A549 (cell line): ENCODE measurements at regions of chr12 and their contacts with region 1.

Region 1: GRCh38 chr12:49967042-49967776 is 5.5 kb downstream of the AQP5 start:
- DNase-seq: peak; percentile 91 to 93
- ATAC-seq: peak; percentile 76 to 87
- H3K4me3 ChIP-seq: peak overlapping the region; percentile 49
- H3K27ac ChIP-seq: peak overlapping the region; percentile 77 to 85
- H3K4me1 ChIP-seq: peaks cover 16% of the 10 kb centered on the region
- CTCF ChIP-seq: peak; percentile 79
- EP300 ChIP-seq: no peak
- POLR2A ChIP-seq: no peak
- RAD21 ChIP-seq: peak; percentile 81 to 86

Region 2: GRCh38 chr12:49740930-49741881 is 226.0 kb before region 1 on chr12 and contains the start of gene TMBIM6:
- CTCF ChIA-PET with region 1: no interaction called
- POLR2A ChIA-PET with region 1: no interaction called
- DNase-seq: peak; percentile 97 to 100
- ATAC-seq: peak; percentile 98
- H3K4me3 ChIP-seq: peak within 1 kb of the TSS; percentile 67
- H3K27ac ChIP-seq: peak within 1 kb of the TSS; percentile 71 to 92
- H3K4me1 ChIP-seq: peaks cover 18% of the 10 kb centered on the region
- CTCF ChIP-seq: peak; percentile 81
- EP300 ChIP-seq: no peak
- POLR2A ChIP-seq: peak; percentile 97
- RAD21 ChIP-seq: peak; percentile 42 to 62; a peak in 4 of 5 replicates
- polyA plus RNA-seq, gene TMBIM6: 1,088 and 1,255 TPM in 2 replicates

Region 3: GRCh38 chr12:49937639-49938300 is 29.4 kb before region 1 on chr12:
- CTCF ChIA-PET with region 1: interaction called, 33 read pairs
- POLR2A ChIA-PET with region 1: no interaction called
- DNase-seq: no peak
- ATAC-seq: peak; percentile 10 to 37; a peak in 3 of 6 replicates
- H3K4me3 ChIP-seq: no peak overlapping the region
- H3K27ac ChIP-seq: no peak overlapping the region
- H3K4me1 ChIP-seq: no peaks in the 10 kb centered on the region
- CTCF ChIP-seq: no peak
- EP300 ChIP-seq: no peak
- POLR2A ChIP-seq: no peak
- RAD21 ChIP-seq: no peak

Region 4: DNA sequence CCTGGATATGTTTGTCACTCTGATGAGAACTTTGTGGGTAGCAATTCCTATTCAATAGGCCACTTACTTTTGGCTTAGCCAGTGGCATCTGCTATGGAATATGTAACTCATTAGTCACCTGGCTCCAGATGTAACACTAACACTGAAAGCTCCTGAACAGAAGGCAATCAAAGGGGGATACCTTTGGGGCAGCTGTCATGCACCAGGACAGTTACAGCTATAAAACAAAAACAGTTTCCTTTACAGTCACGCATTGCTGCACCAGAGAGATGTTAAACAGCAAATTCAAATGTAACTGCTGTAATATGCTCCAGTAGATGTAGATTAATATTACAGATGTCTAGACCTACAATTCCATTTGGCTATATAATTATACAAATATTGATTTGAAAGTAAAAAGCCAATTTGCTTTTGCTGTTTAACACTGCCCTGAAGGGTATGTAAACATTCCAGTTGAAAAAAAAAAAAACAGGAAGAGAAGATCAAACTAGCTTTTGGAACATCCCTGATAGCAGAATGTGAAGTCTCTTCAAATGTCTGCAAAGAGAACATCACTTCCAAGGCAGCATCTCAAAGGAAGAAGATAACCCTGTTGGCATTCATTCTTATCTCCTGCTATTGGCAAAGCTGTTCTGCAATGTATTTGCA is 39.7 kb after region 1 on chr12:
- CTCF ChIA-PET with region 1: interaction called, 63 read pairs
- POLR2A ChIA-PET with region 1: no interaction called
- DNase-seq: no peak
- ATAC-seq: no peak
- H3K4me3 ChIP-seq: no peak overlapping the region
- H3K27ac ChIP-seq: no peak overlapping the region
- H3K4me1 ChIP-seq: no peaks in the 10 kb centered on the region
- CTCF ChIP-seq: no peak
- EP300 ChIP-seq: no peak
- POLR2A ChIP-seq: no peak
- RAD21 ChIP-seq: no peak

Region 5: GRCh38 chr12:50032639-50033581 is 65.7 kb after region 1 on chr12:
- CTCF ChIA-PET with region 1: interaction called, 75 read pairs
- POLR2A ChIA-PET with region 1: no interaction called
- DNase-seq: no peak
- ATAC-seq: peak in 1 of 2 experiments; percentile 19; a peak in 2 of 6 replicates
- H3K4me3 ChIP-seq: no peak overlapping the region
- H3K27ac ChIP-seq: no peak overlapping the region
- H3K4me1 ChIP-seq: no peaks in the 10 kb centered on the region
- CTCF ChIP-seq: no peak
- EP300 ChIP-seq: no peak
- POLR2A ChIP-seq: no peak
- RAD21 ChIP-seq: no peak

Region 6: GRCh38 chr12:50050410-50051098 is 83.3 kb after region 1 on chr12:
- CTCF ChIA-PET with region 1: interaction called, 173 read pairs
- POLR2A ChIA-PET with region 1: interaction called, 3 read pairs
- DNase-seq: no peak
- ATAC-seq: no peak
- H3K4me3 ChIP-seq: no peak overlapping the region
- H3K27ac ChIP-seq: no peak overlapping the region
- H3K4me1 ChIP-seq: 0 out of 3 replicates have a peak, but pooled peaks cover under 1% of the 10 kb centered on the region
- CTCF ChIP-seq: no peak
- EP300 ChIP-seq: no peak
- POLR2A ChIP-seq: no peak
- RAD21 ChIP-seq: no peak

Region 7: GRCh38 chr12:50167041-50167828 is 200.0 kb after region 1 on chr12 and contains the start of gene CERS5:
- CTCF ChIA-PET with region 1: interaction called, 10 read pairs
- POLR2A ChIA-PET with region 1: no interaction called
- DNase-seq: peak; percentile 94 to 99
- ATAC-seq: peak; percentile 98 to 99
- H3K4me3 ChIP-seq: peak within 1 kb of the TSS; percentile 83
- H3K27ac ChIP-seq: peak within 1 kb of the TSS; percentile 84 to 96
- H3K4me1 ChIP-seq: peaks cover 10% of the 10 kb centered on the region; the same call in 2 of the 3 replicates
- CTCF ChIP-seq: no peak
- EP300 ChIP-seq: no peak
- POLR2A ChIP-seq: peak; percentile 74
- RAD21 ChIP-seq: no peak
- polyA plus RNA-seq, gene CERS5: 56.3 and 56.6 TPM in 2 replicates